Endothelial cell of umbilical vein (primary cell): ENCODE measurements at regions of chr11 and their contacts with region 1.

Region 1: DNA sequence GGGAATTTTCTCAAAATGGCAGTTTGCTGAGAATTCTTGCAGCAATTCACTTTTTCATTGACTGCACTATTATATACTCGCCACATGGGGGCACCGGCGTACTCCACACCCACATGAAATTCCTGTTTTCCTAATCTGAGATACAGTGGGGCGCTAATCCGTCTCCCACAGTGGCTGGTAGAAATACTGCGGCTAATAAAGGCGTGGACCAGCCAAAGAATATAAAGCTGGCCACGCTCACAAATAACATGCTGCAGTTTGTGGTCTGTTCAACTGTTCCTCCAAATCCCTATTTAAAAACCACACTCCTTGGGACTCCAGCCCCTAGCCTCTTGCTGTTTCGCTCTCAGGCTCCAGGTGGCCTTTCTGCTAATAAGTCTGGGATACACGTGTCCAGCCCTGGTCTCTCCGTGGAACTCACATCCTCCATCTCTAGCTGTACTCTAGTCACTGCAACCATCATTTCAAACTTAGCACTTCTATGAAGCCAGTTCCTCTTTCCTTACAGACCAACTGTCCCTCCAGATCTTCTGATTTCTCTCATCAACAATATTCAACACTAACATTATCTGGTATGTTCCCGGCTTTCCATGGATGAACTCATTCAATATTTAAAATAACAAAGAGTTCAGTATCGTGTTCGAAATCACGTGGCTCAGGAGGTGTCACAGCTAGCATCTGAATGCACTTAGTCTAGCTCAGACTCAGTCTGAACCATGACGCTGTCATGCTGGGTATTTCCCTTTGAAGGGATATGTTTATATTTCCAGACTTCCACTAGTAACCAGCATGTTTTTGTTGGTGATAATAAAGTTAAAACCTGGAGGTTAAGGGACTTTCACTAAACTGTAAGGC is 22.0 kb downstream of the TBRG1 start:
- DNase-seq: peak; percentile 87
- H3K4me3 ChIP-seq: peak overlapping the region in 1 of 3 experiments; percentile 32
- H3K27ac ChIP-seq: peak overlapping the region; percentile 22
- H3K4me1 ChIP-seq: peaks cover 18% of the 10 kb centered on the region
- H3K27me3 ChIP-seq: no peaks in the 10 kb centered on the region
- CTCF ChIP-seq: peak; percentile 56 to 79
- POLR2A ChIP-seq: no peak

Region 2: DNA sequence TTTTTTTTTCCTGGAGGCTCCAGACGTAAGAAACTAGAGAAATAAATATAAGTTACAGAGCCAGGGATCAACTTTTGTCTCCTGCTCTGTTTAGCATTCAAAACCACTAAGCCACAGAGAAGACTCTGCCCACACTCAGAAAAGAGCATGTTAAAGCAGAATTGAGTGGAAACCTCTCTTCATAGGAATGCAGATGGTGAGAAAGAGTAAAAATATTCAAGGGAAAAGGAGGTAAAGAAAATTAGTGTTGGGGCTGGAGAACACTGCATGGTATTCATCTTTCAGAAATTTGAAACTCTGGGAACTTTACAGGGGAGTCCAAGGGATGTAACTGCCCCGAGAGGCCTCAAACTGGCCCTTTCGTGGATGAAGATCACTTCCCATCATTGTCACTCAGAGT is 1514.7 kb before region 1 on chr11:
- CTCF ChIA-PET with region 1: no interaction called
- POLR2A ChIA-PET with region 1: no interaction called
- dilution Hi-C with region 1: no loop called
- intact Hi-C with region 1: no loop called
- DNase-seq: no peak
- H3K4me3 ChIP-seq: no peak overlapping the region
- H3K27ac ChIP-seq: no peak overlapping the region
- H3K4me1 ChIP-seq: peaks cover 3% of the 10 kb centered on the region
- H3K27me3 ChIP-seq: no peaks in the 10 kb centered on the region
- CTCF ChIP-seq: no peak
- POLR2A ChIP-seq: no peak

Region 3: DNA sequence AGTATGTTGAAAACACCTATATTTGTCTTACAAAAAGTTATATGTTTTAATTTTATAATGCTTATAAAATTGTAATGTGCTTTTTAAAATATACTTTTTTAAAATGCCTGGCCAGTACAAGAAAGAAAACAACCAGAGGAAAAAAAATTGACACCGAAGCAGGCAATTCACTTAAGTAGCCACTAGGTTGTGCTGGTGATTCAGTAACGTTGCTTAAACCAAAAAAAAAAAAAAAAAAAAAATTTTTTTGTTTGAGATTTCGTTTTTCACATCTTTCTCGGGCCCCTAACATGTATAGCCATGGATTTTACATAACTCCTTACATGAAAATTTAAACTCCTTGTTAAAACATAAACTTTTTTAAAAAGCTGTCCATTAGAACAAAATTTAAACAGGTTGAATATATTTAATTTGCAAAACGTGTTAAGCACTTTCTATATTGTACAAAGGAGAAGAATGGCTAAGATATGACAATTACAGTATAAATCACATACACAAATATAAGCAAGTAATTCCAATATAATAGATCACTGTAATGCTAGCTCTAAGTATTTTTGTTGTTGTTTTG is 229.2 kb before region 1 on chr11:
- CTCF ChIA-PET with region 1: no interaction called
- POLR2A ChIA-PET with region 1: no interaction called
- dilution Hi-C with region 1: no loop called
- intact Hi-C with region 1: loop called (anchors 2 kb)
- DNase-seq: peak; percentile 42
- H3K4me3 ChIP-seq: no peak overlapping the region
- H3K27ac ChIP-seq: no peak overlapping the region
- H3K4me1 ChIP-seq: no peaks in the 10 kb centered on the region
- H3K27me3 ChIP-seq: peaks cover 17 to 20% of the 10 kb centered on the region in 2 experiments
- CTCF ChIP-seq: peak; percentile 6 to 48
- POLR2A ChIP-seq: no peak

Region 4: GRCh38 chr11:124633355-124633754 is 11.3 kb before region 1 on chr11:
- CTCF ChIA-PET with region 1: interaction called, 18 read pairs
- POLR2A ChIA-PET with region 1: no interaction called
- dilution Hi-C with region 1: no loop called
- intact Hi-C with region 1: no loop called
- DNase-seq: peak; percentile 26
- H3K4me3 ChIP-seq: no peak overlapping the region
- H3K27ac ChIP-seq: no peak overlapping the region
- H3K4me1 ChIP-seq: no peaks in the 10 kb centered on the region
- H3K27me3 ChIP-seq: no peaks in the 10 kb centered on the region
- CTCF ChIP-seq: peak; percentile 26 to 36
- POLR2A ChIP-seq: no peak

Region 5: DNA sequence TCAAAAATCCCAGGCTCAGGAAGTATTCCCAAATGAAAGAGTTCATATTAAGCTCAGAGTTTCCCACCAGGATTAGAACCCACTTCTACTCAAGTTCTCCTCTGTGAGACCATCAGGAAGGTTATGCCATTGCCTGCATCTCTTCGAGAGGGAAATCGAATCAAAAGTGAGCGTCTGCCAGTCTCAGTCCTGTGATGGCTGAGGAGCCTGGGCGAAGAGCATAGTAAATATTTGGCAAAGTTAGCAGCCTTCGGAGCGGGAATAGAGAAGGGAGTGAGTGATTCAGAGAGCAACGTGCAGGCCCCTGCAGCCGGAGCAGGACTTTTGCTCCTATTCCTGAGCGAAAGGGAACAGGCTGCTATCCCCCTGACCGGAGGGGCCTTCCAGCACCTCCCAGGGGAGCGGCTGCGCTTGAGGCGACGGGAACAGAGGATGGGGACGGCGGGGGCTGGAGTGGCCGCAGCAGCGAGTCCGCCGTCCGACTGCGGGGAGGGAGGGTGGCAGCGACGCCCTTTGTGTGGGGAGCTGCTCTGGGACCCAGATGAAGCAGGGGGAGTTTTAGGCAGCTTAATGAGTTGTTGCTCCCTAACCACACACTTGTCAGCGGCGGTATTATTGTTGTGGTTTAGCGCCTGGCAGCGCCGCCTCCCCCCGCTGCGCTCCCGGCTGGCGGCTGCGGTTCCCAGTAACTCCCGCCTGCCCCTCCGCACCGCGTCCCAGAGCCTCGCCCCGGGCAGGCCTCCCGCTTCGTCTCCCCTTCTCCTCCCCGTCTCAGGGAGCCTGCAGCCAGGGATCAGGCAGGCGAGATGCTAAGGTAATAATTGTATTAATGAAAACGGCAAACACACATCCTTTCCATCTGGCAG is 73.4 kb after region 1 on chr11:
- CTCF ChIA-PET with region 1: no interaction called
- POLR2A ChIA-PET with region 1: no interaction called
- dilution Hi-C with region 1: no loop called
- intact Hi-C with region 1: no loop called
- DNase-seq: peak; percentile 78
- H3K4me3 ChIP-seq: peak overlapping the region; percentile 26 to 61 (median 39)
- H3K27ac ChIP-seq: peak overlapping the region; percentile 62
- H3K4me1 ChIP-seq: peaks cover 24% of the 10 kb centered on the region
- H3K27me3 ChIP-seq: no peaks in the 10 kb centered on the region
- CTCF ChIP-seq: no peak
- POLR2A ChIP-seq: peak; percentile 11

Region 6: GRCh38 chr11:124769801-124770639 is 125.4 kb after region 1 on chr11:
- CTCF ChIA-PET with region 1: interaction called, 12 read pairs
- POLR2A ChIA-PET with region 1: no interaction called
- dilution Hi-C with region 1: no loop called
- intact Hi-C with region 1: no loop called
- DNase-seq: peak; percentile 72
- H3K4me3 ChIP-seq: no peak overlapping the region
- H3K27ac ChIP-seq: peak overlapping the region; percentile 86
- H3K4me1 ChIP-seq: peaks cover 34% of the 10 kb centered on the region
- H3K27me3 ChIP-seq: no peaks in the 10 kb centered on the region
- CTCF ChIP-seq: no peak
- POLR2A ChIP-seq: peak; percentile 41

Region 7: DNA sequence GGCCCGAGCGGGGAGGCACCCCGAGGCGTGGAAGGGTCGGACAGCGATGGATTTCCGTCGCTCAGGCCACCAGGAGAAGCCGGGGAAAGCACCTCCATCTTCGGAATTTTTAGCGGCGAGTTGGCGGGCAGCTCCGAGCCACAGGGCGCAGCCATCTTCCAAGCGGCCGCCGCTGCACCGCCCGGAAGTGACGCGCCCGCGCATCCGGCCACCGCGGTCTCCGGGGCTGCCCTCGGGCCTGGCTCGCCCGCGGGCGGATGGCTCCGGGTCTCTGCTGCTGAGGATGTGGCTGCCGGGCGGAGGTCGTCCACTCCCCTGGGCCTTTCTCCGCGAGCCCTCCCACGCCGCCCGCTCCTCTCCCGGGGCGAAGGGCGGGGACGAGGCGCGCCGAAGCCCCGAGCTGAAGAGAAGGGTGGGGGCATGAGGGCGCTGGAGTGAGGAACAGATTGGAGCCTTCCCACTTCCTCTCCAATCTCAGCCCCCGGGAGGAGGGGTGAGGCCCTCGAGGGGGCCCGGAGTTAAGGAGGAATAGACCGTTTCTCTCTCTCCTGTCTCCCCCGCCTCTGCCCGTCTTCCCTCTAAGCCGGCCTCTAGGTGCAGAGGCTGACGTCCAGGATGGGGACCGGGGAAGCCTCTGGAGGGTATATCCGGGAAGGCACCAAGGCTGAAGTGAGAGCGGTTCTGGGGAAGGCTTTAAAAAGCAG is 155.7 kb after region 1 on chr11 and contains the start of gene MSANTD2:
- CTCF ChIA-PET with region 1: interaction called, 34 read pairs
- POLR2A ChIA-PET with region 1: no interaction called
- dilution Hi-C with region 1: no loop called
- intact Hi-C with region 1: no loop called
- DNase-seq: peak; percentile 82
- H3K4me3 ChIP-seq: peak within 1 kb of the TSS; percentile 59 to 98 (median 62)
- H3K27ac ChIP-seq: peak within 1 kb of the TSS; percentile 81
- H3K4me1 ChIP-seq: peaks cover 20% of the 10 kb centered on the region
- H3K27me3 ChIP-seq: no peaks in the 10 kb centered on the region
- CTCF ChIP-seq: no peak
- POLR2A ChIP-seq: peak; percentile 81
- total RNA-seq, gene MSANTD2: 17.0 and 23.2 TPM in 2 replicates